ENCODE measurements at regions of chr12 and their contacts with region 1.

Region 1: DNA sequence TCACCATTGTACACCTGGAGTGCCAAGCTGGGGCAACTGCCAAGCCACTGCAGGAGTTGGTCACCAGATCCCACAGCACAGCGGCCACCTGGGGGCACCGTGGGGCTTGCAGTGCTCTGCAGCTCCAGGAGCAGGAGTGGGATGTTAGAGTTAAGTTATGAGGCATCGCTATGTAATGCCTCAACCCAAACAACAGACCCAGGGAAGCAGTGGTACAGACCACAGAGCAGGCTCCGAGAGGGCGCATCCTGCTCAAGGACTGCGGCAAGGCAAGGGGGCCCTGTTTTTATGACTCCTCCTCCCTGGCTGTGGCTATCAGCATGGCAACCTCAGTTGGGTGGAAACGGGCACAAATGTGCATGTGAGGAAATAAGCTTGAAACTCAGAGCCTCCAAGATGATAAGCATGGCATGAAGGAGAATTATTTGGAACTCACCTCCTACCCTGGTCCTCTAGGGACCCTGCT is 63.1 kb downstream of the ARL6IP4 start:
- DNase-seq: peak; percentile 87

Region 2: GRCh38 chr12:122995503-122996187 is 47.9 kb before region 1 on chr12:
- intact Hi-C with region 1: no loop called
- DNase-seq: no peak

Region 3: GRCh38 chr12:123115409-123116121 is 72.0 kb after region 1 on chr12:
- intact Hi-C with region 1: loop called (anchors 10 kb)
- DNase-seq: no peak

Region 4: DNA sequence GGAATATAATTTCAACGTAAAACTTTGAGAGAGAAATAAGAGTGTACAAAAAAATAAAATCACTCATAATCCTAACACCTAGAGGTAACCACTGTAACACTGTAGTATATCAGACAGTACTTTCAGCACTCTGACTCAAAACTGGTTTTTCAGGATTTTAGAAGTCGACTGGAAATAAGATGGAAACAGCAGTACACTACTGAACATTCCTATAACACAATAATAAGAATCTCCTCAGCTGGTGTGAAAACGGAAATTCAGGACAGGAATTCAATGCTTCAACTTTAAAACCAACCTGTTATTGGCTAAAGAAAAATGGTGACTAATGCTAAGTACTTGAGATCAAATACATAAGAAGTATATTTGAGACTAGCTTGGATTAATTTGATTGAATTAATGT is 119.7 kb after region 1 on chr12:
- intact Hi-C with region 1: no loop called
- DNase-seq: no peak